ENCODE measurements at regions of chr6 and their contacts with region 1.

Region 1: DNA sequence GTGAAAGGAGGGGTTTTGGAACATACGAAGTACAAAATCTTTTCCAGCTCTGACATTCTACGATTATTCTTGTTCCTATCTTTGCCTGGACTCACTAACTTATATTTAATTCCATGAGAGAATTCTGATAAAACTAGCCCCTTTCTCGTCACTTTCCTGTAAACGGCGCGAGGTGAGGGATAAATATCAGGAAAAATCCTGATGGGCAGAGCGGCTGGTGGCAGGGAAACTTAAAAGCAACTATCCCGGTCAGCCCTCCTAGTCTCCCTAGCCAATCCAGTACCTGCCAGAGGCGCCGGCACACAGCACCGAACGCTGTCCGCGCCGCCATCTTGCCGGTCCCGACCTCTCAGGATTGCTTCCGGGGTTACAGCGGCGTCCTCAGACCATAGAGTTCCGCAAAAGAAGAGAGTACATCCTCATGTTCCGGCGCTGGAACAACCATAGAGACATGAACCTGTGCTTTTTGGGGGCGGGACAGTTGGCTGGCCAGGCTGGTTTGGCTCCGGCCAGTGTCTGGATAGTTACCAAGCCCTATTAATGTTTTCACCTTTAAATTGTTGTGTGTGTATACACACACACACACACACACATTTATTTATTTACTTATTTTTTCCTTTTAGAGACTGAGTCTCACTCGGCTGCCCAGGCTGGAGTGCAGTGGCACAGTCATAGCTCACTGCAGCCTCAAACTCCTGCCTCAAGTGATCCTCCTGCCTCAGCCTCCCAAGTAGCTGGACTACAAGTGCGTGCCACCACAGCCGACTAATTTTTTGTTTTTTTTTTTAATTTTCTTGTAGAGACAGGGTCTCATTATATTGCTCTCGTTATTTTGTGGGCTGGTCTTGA is at the start of gene MRPS10:
- DNase-seq: peak; percentile 90 to 98 (median 95)
- H3K4me3 ChIP-seq: peak within 1 kb of the TSS; percentile 8 to 84 (median 78)
- H3K27ac ChIP-seq: peak within 1 kb of the TSS; percentile 12 to 86 (median 54)
- H3K4me1 ChIP-seq: peaks cover 8 to 9% of the 10 kb centered on the region in 2 donors
- H3K27me3 ChIP-seq: no peaks in the 10 kb centered on the region
- CTCF ChIP-seq: no peak
- POLR2A ChIP-seq: peak; percentile 73 to 74
- total RNA-seq, gene MRPS10: 25.5 to 43.2 (median 34.3) TPM

Region 2: GRCh38 chr6:41872147-41872546 is 345.6 kb before region 1 on chr6:
- intact Hi-C with region 1: no loop called
- DNase-seq: peak in 1 of 7 donors; percentile 8
- H3K4me3 ChIP-seq: no peak overlapping the region
- H3K27ac ChIP-seq: no peak overlapping the region
- H3K4me1 ChIP-seq: peaks cover 0 to 5% of the 10 kb centered on the region in 2 donors
- H3K27me3 ChIP-seq: no peaks in the 10 kb centered on the region
- CTCF ChIP-seq: no peak
- POLR2A ChIP-seq: no peak

Region 3: GRCh38 chr6:42158011-42158410 is 59.7 kb before region 1 on chr6:
- intact Hi-C with region 1: no loop called
- DNase-seq: no peak
- H3K4me3 ChIP-seq: no peak overlapping the region
- H3K27ac ChIP-seq: no peak overlapping the region
- H3K4me1 ChIP-seq: no peaks in the 10 kb centered on the region
- H3K27me3 ChIP-seq: no peaks in the 10 kb centered on the region
- CTCF ChIP-seq: no peak
- POLR2A ChIP-seq: no peak

Region 4: DNA sequence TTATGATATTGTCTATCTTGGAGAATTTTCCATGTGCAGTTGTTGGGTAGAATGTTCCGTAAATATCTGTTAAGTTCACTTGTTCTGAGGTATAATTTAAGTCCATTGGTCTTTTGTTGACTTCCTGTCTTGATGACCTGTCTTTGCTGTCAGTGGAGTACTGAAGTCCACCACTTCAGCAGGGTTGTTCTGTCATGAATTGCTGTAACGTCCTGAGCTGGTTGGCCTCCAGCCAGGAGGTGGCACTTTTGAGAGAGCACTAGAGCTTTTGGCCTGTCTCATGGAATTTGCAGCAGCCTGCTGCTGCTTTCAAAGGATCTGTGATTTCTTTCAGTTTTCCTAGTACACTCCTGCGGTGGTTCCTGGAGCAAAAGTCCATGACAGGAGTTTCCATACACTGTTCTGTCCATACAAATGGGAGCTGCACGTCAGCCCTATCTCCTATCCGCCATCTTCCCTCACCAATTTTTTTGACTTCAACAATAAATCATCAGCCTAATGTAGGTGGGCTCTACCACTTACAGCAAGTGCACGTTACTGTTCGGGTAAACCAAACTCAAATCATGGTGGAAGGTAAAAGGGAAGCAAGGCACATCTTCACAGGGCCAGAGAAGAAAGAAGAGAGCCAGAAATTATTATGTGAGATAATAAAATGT is 280.9 kb after region 1 on chr6:
- intact Hi-C with region 1: no loop called
- DNase-seq: peak in 2 of 7 donors; percentile 18 to 22
- H3K4me3 ChIP-seq: no peak overlapping the region
- H3K27ac ChIP-seq: no peak overlapping the region
- H3K4me1 ChIP-seq: no peaks in the 10 kb centered on the region
- H3K27me3 ChIP-seq: no peaks in the 10 kb centered on the region
- CTCF ChIP-seq: no peak
- POLR2A ChIP-seq: no peak

Region 5: DNA sequence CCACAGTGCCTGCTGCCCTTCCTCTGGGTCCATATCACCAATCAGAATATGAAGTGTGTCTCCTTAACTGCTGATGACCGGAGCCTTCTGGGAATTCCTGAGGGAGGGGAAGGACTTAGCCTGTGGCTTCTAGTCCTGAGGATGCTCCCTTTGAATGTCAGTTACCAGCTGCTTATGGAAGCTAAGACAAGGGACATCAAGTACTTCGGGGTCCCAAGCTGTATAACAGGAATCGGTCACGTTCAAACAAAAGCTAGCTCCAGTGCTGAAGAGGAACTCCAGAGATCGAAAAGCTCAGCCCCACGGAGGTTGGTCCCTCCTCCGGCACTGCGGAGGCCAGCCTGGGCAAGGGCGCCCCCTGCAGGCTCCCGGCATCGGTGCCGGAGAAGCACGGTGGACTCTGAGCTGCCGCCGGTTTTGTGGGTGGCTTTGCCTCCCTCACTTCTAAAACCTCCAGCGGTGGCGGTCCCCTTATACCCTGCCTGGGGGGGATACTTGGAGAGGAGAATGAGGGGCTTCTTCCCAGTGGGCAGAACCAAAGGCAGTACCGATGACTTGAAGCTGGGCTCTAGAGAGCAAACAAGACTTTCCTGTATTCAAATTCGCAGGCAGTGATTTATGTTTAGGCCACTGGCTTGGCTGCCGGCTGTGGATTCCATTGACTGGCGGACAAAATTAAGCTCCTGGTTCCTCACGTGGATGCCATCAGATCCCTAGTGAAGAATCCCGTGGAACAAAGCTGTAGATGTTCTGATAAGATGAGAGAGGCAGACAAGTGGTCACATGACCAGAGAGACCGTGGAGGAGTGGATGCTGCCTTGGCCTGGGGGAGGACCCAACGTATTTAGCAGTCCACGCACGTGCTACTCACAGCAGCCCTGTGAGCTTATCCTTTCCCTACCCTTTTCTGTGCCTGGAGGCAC is 329.9 kb after region 1 on chr6:
- intact Hi-C with region 1: loop called in 1 of 2 experiments (anchors 5 kb)
- DNase-seq: peak; percentile 76 to 89 (median 87)
- H3K4me3 ChIP-seq: peak overlapping the region in 2 of 4 donors; percentile 57 to 72
- H3K27ac ChIP-seq: peak overlapping the region in 4 of 5 donors; percentile 24 to 83 (median 55)
- H3K4me1 ChIP-seq: peaks cover 0 to 5% of the 10 kb centered on the region in 2 donors
- H3K27me3 ChIP-seq: no peaks in the 10 kb centered on the region
- CTCF ChIP-seq: peak; percentile 88 to 99 (median 96)
- POLR2A ChIP-seq: peak in 1 of 2 donors; percentile 20